PC-3 (cell line): ENCODE measurements at regions of chr21 and their contacts with region 1.

Region 1: DNA sequence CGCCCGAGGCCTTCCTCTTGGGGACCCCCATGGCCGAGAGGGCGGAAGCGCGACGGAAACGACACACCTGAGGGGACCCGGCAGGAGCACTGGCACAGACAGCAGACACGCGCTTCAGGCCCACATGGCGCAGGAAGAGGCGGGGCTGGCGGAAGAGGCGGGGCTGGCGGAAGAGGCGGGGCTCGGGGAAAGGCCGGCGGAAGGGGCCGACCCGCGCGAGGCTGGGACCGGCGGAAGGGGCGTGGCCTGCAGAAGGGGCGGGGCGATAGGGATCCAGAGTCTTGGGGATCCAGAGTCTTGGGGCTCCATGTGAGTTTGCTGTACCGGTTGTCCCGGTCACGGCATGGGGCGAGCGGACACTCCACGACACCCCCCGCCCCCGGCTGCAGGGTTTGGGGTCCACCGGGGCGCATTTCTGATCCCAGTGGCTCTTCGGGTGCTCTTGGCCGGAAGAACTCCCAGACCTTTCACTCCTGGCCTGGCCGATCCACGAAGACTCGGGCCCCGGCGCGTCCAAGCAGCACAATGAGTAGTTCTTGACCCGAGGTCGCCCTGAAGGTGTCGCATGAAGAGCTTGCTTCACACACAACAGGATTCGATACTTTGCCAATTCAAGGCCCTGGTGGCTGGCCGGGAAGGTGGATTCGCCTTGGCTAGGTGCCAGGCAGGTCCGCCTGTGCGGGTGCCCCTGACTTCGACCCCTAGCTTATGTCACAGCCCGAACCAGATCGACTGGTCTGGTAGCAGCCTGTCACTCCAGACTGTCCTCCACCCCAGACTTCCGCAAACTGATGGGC is at the start of gene URB1:
- DNase-seq: peak; percentile 88
- ATAC-seq: peak; percentile 87
- H3K4me3 ChIP-seq: peak within 1 kb of the TSS; percentile 78
- H3K27ac ChIP-seq: peak within 1 kb of the TSS; percentile 82
- H3K4me1 ChIP-seq: peaks cover 17% of the 10 kb centered on the region
- H3K27me3 ChIP-seq: no peaks in the 10 kb centered on the region
- CTCF ChIP-seq: peak; percentile 25; the same call in 1 of the 2 replicates
- total RNA-seq, gene URB1: 27.8 and 36.3 TPM in 2 replicates

Region 2: GRCh38 chr21:32382108-32382644 is 10.9 kb before region 1 on chr21:
- CTCF ChIA-PET with region 1: interaction called, 3 read pairs
- POLR2A ChIA-PET with region 1: no interaction called
- intact Hi-C with region 1: loop called (anchors 1 kb)
- DNase-seq: peak; percentile 92
- ATAC-seq: peak; percentile 85
- H3K4me3 ChIP-seq: no peak overlapping the region
- H3K27ac ChIP-seq: peak overlapping the region; percentile 79
- H3K4me1 ChIP-seq: peaks cover 27% of the 10 kb centered on the region
- H3K27me3 ChIP-seq: no peaks in the 10 kb centered on the region
- CTCF ChIP-seq: no peak

Region 3: DNA sequence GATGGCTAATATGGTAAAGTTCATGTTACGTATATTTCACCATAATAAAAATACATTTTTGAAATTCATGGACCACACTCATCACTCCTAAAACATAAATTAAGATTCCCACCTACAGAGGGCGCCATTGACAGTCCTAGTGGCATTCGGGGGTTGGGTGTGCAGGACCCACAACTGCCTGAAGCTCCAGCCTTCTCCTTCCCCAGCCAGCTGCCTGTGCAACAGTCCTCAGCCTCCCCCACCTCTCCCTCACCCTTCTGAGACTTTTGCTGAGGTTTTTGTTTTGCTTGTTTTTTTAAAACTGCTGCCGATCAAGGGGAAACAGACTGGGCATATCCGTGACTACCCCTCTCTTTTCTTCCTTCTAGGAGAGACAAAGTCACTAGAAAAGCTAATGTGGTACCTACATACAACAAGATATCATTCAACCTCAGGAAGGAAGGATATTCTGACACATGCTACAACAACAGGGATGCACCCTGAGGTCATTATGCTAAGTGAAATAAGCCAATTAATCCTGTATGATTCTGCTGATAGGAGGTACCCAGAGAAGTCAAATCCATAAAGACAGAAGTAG is 10.2 kb after region 1 on chr21:
- CTCF ChIA-PET with region 1: no interaction called
- POLR2A ChIA-PET with region 1: interaction called, 15 read pairs
- intact Hi-C with region 1: no loop called
- DNase-seq: peak; percentile 88
- ATAC-seq: peak; percentile 93
- H3K4me3 ChIP-seq: no peak overlapping the region
- H3K27ac ChIP-seq: no peak overlapping the region
- H3K4me1 ChIP-seq: no peaks in the 10 kb centered on the region
- H3K27me3 ChIP-seq: no peaks in the 10 kb centered on the region
- CTCF ChIP-seq: peak; percentile 90

Region 4: DNA sequence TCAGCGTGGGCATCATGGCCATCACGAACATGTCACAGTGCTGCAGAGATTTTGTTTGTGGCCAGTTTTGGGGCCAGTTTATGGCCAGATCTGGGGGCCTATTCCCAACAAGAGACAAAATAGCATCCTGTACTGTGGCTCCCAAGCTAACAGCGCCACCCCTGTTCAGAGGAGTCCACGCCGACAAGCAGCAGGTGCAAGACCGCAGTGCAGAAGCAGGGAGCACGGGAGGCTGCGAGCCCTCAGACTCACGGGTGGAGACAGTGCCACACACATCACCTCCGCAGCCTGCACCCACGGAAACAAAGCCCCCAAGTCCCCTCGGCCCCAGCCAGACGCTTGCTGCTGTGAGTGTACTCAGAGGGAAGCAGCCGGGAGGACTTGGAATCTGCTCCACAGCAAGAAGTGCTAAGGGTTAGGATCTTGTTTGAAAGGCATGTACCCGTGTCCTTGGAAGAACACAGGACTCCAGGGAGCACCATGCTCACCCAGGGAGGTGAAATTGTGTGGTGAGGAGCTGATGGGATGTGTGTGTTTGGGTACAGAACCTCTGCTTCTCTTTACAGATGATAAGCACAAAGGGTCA is 185.1 kb after region 1 on chr21:
- CTCF ChIA-PET with region 1: no interaction called
- POLR2A ChIA-PET with region 1: interaction called, 20 read pairs
- intact Hi-C with region 1: no loop called
- DNase-seq: peak; percentile 26
- ATAC-seq: peak; percentile 53; the same call in 1 of the 2 replicates
- H3K4me3 ChIP-seq: no peak overlapping the region
- H3K27ac ChIP-seq: no peak overlapping the region
- H3K4me1 ChIP-seq: no peaks in the 10 kb centered on the region
- H3K27me3 ChIP-seq: no peaks in the 10 kb centered on the region
- CTCF ChIP-seq: peak; percentile 61